Activated CD4-positive, alpha-beta memory T cell treated with anti-CD3 and anti-CD28 coated beads, Interleukin-2, amount 10 ng/mL, durations not matched to agents 7 days and 5 days (primary cell): ENCODE measurements at regions of chr10 and their contacts with region 1.

Region 1: GRCh38 chr10:124657806-124658205 is 86.4 kb downstream of the FAM53B start:
- DNase-seq: peak; percentile 62
- H3K4me3 Mint-ChIP-seq: peak overlapping the region; percentile 39
- H3K27ac Mint-ChIP-seq: peak overlapping the region; percentile 79
- H3K4me1 Mint-ChIP-seq: peaks cover 75% of the 10 kb centered on the region
- H3K27me3 Mint-ChIP-seq: no peaks in the 10 kb centered on the region

Region 2: DNA sequence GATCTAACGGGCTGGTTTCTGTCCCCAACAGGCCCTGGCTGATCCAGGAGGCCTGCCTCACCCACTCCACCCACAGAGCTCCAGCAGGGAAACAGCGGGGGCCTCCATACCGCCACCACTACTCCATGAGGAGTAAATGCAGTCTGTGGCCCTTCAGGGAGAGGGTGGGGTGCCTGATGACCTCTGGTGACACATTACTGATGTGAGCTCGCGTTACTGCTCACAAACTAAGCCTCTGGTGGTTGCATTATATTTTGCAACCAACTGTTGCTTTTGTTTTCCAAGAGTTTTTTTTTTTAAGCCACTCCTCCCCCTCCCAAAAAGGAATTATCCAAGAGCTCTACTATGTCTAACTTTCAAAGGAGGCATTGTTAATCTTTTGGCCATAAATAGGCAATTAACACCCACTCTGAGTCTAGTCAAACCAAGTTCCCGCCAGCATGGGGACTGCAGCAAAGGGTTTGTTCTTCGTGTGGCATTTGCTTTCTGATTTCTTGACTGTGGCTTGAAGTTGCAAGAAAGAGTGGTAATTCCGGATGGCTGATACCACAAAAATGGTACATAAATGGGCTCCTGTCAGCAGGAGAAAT is 13.8 kb after region 1 on chr10:
- CTCF ChIA-PET with region 1: interaction called, 24 read pairs
- POLR2A ChIA-PET with region 1: interaction called, 14 read pairs
- DNase-seq: no peak
- H3K4me3 Mint-ChIP-seq: no peak overlapping the region
- H3K27ac Mint-ChIP-seq: peak overlapping the region; percentile 76
- H3K4me1 Mint-ChIP-seq: peaks cover 71% of the 10 kb centered on the region
- H3K27me3 Mint-ChIP-seq: no peaks in the 10 kb centered on the region